PC-3 (cell line): ENCODE measurements at regions of chr7 and their contacts with region 1.

Region 1: GRCh38 chr7:10128748-10129147 is 844.9 kb upstream of the PHF14 start:
- DNase-seq: peak; percentile 14
- ATAC-seq: peak; percentile 49; the same call in 1 of the 2 replicates
- H3K4me3 ChIP-seq: no peak overlapping the region
- H3K27ac ChIP-seq: no peak overlapping the region
- H3K4me1 ChIP-seq: no peaks in the 10 kb centered on the region
- H3K27me3 ChIP-seq: no peaks in the 10 kb centered on the region
- CTCF ChIP-seq: peak; percentile 48; the same call in 1 of the 2 replicates

Region 2: DNA sequence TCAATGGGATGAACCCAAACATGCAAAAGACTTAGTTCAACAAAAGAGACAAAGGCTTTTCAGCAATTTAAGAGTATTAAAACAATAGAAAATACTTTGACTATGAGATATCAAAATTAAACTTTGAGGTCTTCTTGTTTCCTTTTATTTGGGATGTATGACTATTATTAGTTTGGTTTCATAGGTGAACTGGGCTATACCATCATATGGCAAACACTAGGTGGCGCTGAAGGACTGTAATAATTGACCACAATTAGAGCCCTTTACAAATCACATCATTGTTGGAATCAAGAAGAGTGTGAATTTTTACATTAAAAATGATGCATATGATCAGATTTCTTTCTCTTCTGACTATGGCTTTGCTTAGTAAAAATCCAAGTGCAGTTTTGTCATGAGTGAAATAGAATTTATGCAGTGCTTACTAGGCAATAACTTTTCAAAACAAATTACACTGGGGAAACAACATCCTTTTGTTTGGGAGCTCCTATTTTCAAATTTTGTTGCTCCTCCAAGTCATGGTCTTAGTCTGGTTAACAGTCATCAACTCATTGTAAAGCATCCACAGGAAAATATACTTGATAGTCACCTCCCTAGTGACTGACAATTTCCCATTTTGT is 1710.0 kb before region 1 on chr7:
- CTCF ChIA-PET with region 1: interaction called, 3 read pairs
- POLR2A ChIA-PET with region 1: no interaction called
- intact Hi-C with region 1: loop called (anchors 1 kb)
- DNase-seq: peak; percentile 70
- ATAC-seq: peak; percentile 94
- H3K4me3 ChIP-seq: no peak overlapping the region
- H3K27ac ChIP-seq: no peak overlapping the region
- H3K4me1 ChIP-seq: no peaks in the 10 kb centered on the region
- H3K27me3 ChIP-seq: no peaks in the 10 kb centered on the region
- CTCF ChIP-seq: peak; percentile 86

Region 3: DNA sequence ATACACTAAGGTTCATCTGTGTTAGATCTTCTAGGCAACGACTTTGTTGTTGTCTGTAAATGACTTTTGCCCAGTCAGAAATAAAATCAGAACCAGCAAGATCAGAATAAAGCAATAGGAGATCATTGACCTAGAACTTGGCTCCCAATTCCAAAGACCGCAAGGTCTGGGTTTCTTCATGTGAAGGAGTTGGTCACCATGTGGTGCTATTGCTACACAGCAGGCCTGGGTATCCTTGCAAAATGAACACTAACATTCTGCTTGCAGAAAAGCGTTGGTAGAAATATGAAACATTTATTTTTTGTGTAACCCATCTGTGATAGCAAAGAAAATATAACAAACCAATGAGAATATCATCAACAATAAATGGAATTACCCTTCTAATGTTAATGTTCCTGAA is 864.4 kb before region 1 on chr7:
- CTCF ChIA-PET with region 1: no interaction called
- POLR2A ChIA-PET with region 1: no interaction called
- intact Hi-C with region 1: loop called (anchors 1 kb)
- DNase-seq: no peak
- ATAC-seq: peak; percentile 61
- H3K4me3 ChIP-seq: no peak overlapping the region
- H3K27ac ChIP-seq: no peak overlapping the region
- H3K4me1 ChIP-seq: no peaks in the 10 kb centered on the region
- H3K27me3 ChIP-seq: no peaks in the 10 kb centered on the region
- CTCF ChIP-seq: peak; percentile 18; the same call in 1 of the 2 replicates

Region 4: DNA sequence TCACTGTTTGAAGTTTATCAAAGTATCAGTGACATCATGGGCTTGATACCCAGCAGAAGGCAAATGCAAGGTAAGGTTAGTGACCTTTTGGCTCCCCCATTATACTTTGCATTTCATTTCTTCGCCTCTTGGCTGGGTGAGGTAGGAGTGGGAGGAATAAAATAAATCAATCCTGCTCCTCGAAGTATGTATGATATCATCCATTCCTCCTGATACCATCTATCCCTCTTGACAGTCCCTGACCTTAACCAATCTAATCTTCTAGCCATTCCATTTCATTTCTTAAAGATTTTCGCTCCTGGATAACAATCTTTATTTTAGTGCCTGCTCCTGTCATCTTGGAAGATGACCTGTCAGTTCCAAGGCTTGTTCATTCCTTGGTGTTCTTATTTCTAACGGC is 612.1 kb before region 1 on chr7:
- CTCF ChIA-PET with region 1: no interaction called
- POLR2A ChIA-PET with region 1: no interaction called
- intact Hi-C with region 1: loop called (anchors 1 kb)
- DNase-seq: no peak
- ATAC-seq: no peak
- H3K4me3 ChIP-seq: no peak overlapping the region
- H3K27ac ChIP-seq: no peak overlapping the region
- H3K4me1 ChIP-seq: no peaks in the 10 kb centered on the region
- H3K27me3 ChIP-seq: no peaks in the 10 kb centered on the region
- CTCF ChIP-seq: no peak

Region 5: GRCh38 chr7:10022957-10023356 is 105.8 kb before region 1 on chr7:
- CTCF ChIA-PET with region 1: no interaction called
- POLR2A ChIA-PET with region 1: no interaction called
- intact Hi-C with region 1: loop called (anchors 2 kb)
- DNase-seq: peak; percentile 65
- ATAC-seq: peak; percentile 77
- H3K4me3 ChIP-seq: no peak overlapping the region
- H3K27ac ChIP-seq: no peak overlapping the region
- H3K4me1 ChIP-seq: no peaks in the 10 kb centered on the region
- H3K27me3 ChIP-seq: no peaks in the 10 kb centered on the region
- CTCF ChIP-seq: peak; percentile 33; the same call in 1 of the 2 replicates

Region 6: GRCh38 chr7:10044857-10045256 is 83.9 kb before region 1 on chr7:
- CTCF ChIA-PET with region 1: no interaction called
- POLR2A ChIA-PET with region 1: no interaction called
- intact Hi-C with region 1: no loop called
- DNase-seq: no peak
- ATAC-seq: peak; percentile 29
- H3K4me3 ChIP-seq: no peak overlapping the region
- H3K27ac ChIP-seq: no peak overlapping the region
- H3K4me1 ChIP-seq: no peaks in the 10 kb centered on the region
- H3K27me3 ChIP-seq: no peaks in the 10 kb centered on the region
- CTCF ChIP-seq: no peak